Heart left ventricle (tissue), 16 donors: ENCODE measurements at regions of chr9 and their contacts with region 1.

Region 1: DNA sequence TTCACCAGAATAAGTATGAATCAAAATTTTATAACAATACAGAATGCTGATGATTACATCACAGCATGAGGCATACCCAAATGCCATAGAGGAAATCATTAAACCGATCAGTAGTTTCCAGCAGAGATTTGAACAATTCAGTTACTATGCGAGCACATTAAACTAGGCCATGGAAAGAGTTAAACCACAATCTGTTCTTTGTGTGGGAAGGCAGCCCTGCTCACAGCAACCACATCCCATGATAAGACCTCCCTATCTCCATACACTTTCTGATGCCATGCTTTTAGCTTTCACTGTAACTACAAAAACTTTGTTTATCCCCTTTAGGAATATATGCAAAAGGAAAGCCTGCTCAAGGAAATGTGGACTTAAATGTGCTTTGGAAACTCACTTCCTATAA is 4.5 kb downstream of the NFIB start:
- DNase-seq: no peak
- ATAC-seq: peak; percentile 11 to 38 (median 25)
- H3K4me3 ChIP-seq: peak overlapping the region; percentile 5 to 90 (median 80)
- H3K27ac ChIP-seq: peak overlapping the region; percentile 51 to 100 (median 80)
- H3K4me1 ChIP-seq: peaks cover 0 to 59% (median 44%) of the 10 kb centered on the region in 12 donors
- H3K27me3 ChIP-seq: peaks cover 0 to 29% (median 0%) of the 10 kb centered on the region in 9 donors
- CTCF ChIP-seq: no peak
- POLR2A ChIP-seq: no peak

Region 2: GRCh38 chr9:14096258-14096922 is 213.0 kb before region 1 on chr9:
- intact Hi-C with region 1: loop called in 3 of 10 experiments (anchors 2 to 10 kb)
- DNase-seq: peak in 4 of 5 donors; percentile 40 to 53 (median 42)
- ATAC-seq: peak; percentile 81 to 87 (median 84)
- H3K4me3 ChIP-seq: peak overlapping the region in 10 of 12 donors; percentile 9 to 48 (median 32)
- H3K27ac ChIP-seq: peak overlapping the region; percentile 39 to 90 (median 82)
- H3K4me1 ChIP-seq: peaks cover 0 to 71% (median 49%) of the 10 kb centered on the region in 12 donors
- H3K27me3 ChIP-seq: no peaks in the 10 kb centered on the region
- CTCF ChIP-seq: no peak
- POLR2A ChIP-seq: no peak

Region 3: DNA sequence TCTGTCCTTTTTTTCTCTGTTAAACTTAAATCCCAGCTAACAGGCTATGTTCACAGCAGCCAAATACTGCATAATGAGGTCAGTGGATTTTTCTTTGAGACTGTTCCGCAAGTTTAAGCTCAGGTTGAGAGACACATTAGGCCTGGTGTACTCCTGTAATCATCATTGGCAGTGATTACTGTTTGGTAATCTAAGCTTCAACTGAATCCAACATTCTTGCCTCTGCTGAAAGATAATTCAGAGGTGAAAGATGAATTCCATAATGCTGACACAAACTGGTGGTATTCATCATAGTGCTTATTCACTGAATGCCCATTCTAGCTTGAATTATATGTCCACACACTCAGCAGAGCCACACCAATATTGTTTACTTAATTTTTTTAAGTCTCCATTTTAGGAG is 103.9 kb before region 1 on chr9:
- intact Hi-C with region 1: loop called in 2 of 10 experiments (anchors 5 to 10 kb)
- DNase-seq: no peak
- ATAC-seq: peak; percentile 41 to 60 (median 56)
- H3K4me3 ChIP-seq: no peak overlapping the region
- H3K27ac ChIP-seq: peak overlapping the region in 10 of 12 donors; percentile 39 to 79 (median 66)
- H3K4me1 ChIP-seq: peaks cover 13 to 90% (median 55%) of the 10 kb centered on the region in 12 donors
- H3K27me3 ChIP-seq: no peaks in the 10 kb centered on the region
- CTCF ChIP-seq: no peak
- POLR2A ChIP-seq: no peak

Region 4: GRCh38 chr9:14221558-14221957 is 87.8 kb before region 1 on chr9:
- intact Hi-C with region 1: loop called in 1 of 10 experiments (anchors 5 kb)
- DNase-seq: no peak
- ATAC-seq: peak; percentile 68 to 84 (median 76)
- H3K4me3 ChIP-seq: no peak overlapping the region
- H3K27ac ChIP-seq: peak overlapping the region; percentile 4 to 86 (median 70)
- H3K4me1 ChIP-seq: peaks cover 7 to 70% (median 53%) of the 10 kb centered on the region in 12 donors
- H3K27me3 ChIP-seq: no peaks in the 10 kb centered on the region
- CTCF ChIP-seq: no peak
- POLR2A ChIP-seq: no peak

Region 5: GRCh38 chr9:14251154-14252071 is 58.0 kb before region 1 on chr9:
- intact Hi-C with region 1: loop called in 9 of 10 experiments (anchors 5 to 10 kb)
- DNase-seq: peak; percentile 85 to 91 (median 88)
- ATAC-seq: peak; percentile 89 to 95 (median 94)
- H3K4me3 ChIP-seq: peak overlapping the region in 7 of 12 donors; percentile 9 to 38 (median 18)
- H3K27ac ChIP-seq: peak overlapping the region in 11 of 12 donors; percentile 51 to 76 (median 64)
- H3K4me1 ChIP-seq: peaks cover 3 to 81% (median 56%) of the 10 kb centered on the region in 12 donors
- H3K27me3 ChIP-seq: no peaks in the 10 kb centered on the region
- CTCF ChIP-seq: peak in 1 of 12 donors; percentile 9
- POLR2A ChIP-seq: no peak

Region 6: GRCh38 chr9:14271093-14271673 is 38.2 kb before region 1 on chr9:
- intact Hi-C with region 1: loop called in 6 of 10 experiments (anchors 5 kb)
- DNase-seq: peak; percentile 72 to 79 (median 77)
- ATAC-seq: peak; percentile 44 to 74 (median 60)
- H3K4me3 ChIP-seq: no peak overlapping the region
- H3K27ac ChIP-seq: peak overlapping the region in 10 of 12 donors; percentile 8 to 68 (median 44)
- H3K4me1 ChIP-seq: peaks cover 14 to 79% (median 63%) of the 10 kb centered on the region in 12 donors
- H3K27me3 ChIP-seq: no peaks in the 10 kb centered on the region
- CTCF ChIP-seq: no peak
- POLR2A ChIP-seq: no peak

Region 7: GRCh38 chr9:14326264-14326826 is 16.9 kb after region 1 on chr9:
- intact Hi-C with region 1: no loop called
- DNase-seq: no peak
- ATAC-seq: no peak
- H3K4me3 ChIP-seq: no peak overlapping the region
- H3K27ac ChIP-seq: peak overlapping the region in 2 of 12 donors; percentile 3 to 14
- H3K4me1 ChIP-seq: peaks cover 0 to 44% (median 13%) of the 10 kb centered on the region in 12 donors
- H3K27me3 ChIP-seq: peaks cover 0 to 6% (median 0%) of the 10 kb centered on the region in 9 donors
- CTCF ChIP-seq: no peak
- POLR2A ChIP-seq: no peak